ENCODE measurements at regions of chr5 and their contacts with region 1.

Region 1: GRCh38 chr5:54624805-54625561 is 107.4 kb downstream of the SNX18 start:
- DNase-seq: no peak
- H3K4me3 ChIP-seq: no peak overlapping the region
- H3K27ac ChIP-seq: no peak overlapping the region
- H3K4me1 ChIP-seq: no peaks in the 10 kb centered on the region
- H3K27me3 ChIP-seq: no peaks in the 10 kb centered on the region
- CTCF ChIP-seq: no peak
- POLR2A ChIP-seq: no peak

Region 2: DNA sequence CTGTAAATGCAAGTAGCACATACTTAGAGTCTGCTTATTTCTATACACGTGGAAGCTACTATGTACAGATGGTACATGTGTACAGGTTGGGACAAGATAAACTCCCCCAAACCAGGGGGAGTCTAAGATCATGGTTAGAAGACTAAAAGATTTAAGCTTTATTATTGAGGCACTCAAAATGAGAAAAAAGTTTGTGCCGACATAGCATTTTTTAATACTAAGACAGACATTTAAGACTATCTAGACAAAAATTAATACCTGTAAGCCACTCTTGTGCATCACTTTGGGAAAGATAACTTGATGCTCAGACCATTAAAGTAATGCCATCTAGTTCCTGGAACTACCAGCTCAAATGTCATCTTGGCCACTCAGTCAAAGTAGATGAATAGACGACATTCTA is 594.0 kb before region 1 on chr5:
- intact Hi-C with region 1: no loop called
- DNase-seq: no peak
- H3K4me3 ChIP-seq: no peak overlapping the region
- H3K27ac ChIP-seq: no peak overlapping the region
- H3K4me1 ChIP-seq: no peaks in the 10 kb centered on the region
- H3K27me3 ChIP-seq: no peaks in the 10 kb centered on the region
- CTCF ChIP-seq: no peak
- POLR2A ChIP-seq: no peak

Region 3: DNA sequence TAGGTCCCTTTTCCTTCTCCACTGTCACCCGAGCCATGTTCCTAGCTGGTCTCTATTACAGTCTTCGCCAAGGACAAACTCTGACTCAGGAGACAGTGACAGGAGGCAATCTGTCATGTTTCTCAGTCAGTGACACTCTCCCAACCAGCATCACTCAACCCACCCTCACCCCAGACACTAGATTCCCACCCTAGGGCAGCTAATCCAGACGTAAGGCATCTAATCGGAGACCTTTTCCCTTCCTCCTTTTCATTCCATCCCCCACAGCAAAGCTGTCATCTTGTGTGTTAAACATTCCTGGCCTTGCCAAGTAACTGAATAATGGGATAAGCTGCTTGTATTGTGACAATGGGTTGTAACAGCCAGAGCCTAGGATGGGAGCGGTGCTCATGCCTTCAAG is 12.3 kb before region 1 on chr5:
- intact Hi-C with region 1: loop called (anchors 1 kb)
- DNase-seq: no peak
- H3K4me3 ChIP-seq: no peak overlapping the region
- H3K27ac ChIP-seq: no peak overlapping the region
- H3K4me1 ChIP-seq: no peaks in the 10 kb centered on the region
- H3K27me3 ChIP-seq: no peaks in the 10 kb centered on the region
- CTCF ChIP-seq: no peak
- POLR2A ChIP-seq: no peak